ENCODE measurements at regions of chr5 and their contacts with region 1.

Region 1: DNA sequence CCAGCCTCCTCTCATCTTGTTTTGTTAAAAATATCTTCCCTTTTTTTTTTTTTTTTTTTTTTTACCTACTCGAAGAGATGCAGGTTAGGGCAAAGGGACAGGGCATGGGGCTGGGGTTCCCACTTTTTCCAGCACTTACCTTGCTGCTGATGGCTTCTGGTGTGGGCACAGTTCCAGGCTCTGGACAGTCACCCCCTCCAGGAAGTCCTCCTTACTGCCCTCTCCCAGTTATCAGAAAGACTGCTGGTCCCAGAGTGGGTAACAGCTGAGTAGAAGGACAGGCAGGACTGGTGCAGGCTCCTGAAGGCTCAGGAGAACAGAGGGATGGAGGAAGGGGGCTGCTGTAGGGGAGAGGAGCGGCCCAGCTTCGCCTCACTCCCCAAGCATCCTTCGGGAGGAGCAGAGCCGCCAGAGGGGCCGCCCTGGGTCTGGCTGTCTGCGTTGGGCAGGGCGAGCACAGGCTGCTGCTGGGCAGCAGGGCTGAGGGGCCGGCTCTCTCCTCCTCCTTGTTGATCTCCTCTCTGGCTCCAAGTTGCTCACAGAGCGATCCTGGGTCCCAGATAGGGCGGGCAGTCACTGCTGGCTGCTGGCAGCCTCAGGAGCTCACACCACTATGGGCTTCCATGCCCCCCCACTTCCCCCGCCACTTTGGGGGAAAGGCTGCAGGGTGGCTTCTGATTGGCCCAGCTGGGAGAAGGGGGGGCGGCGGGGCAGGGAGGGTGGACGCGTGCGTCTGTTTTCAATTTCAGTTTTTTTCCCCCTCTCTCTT is at the start of gene PDGFRB:
- DNase-seq: peak; percentile 88
- H3K4me3 ChIP-seq: peak within 1 kb of the TSS; percentile 67 to 96
- H3K27ac ChIP-seq: peak within 1 kb of the TSS; percentile 94 to 98
- H3K4me1 ChIP-seq: peaks cover 43 to 86% of the 10 kb centered on the region in 2 experiments
- H3K27me3 ChIP-seq: no peaks in the 10 kb centered on the region
- CTCF ChIP-seq: no peak; the same call in 1 of the 2 replicates
- EP300 ChIP-seq: peak; percentile 56 to 59; a peak in 2 of 4 replicates
- RAD21 ChIP-seq: peak; percentile 4; the same call in 1 of the 2 replicates
- polyA plus RNA-seq, gene PDGFRB: 25.9 and 32.1 TPM in 2 replicates

Region 2: DNA sequence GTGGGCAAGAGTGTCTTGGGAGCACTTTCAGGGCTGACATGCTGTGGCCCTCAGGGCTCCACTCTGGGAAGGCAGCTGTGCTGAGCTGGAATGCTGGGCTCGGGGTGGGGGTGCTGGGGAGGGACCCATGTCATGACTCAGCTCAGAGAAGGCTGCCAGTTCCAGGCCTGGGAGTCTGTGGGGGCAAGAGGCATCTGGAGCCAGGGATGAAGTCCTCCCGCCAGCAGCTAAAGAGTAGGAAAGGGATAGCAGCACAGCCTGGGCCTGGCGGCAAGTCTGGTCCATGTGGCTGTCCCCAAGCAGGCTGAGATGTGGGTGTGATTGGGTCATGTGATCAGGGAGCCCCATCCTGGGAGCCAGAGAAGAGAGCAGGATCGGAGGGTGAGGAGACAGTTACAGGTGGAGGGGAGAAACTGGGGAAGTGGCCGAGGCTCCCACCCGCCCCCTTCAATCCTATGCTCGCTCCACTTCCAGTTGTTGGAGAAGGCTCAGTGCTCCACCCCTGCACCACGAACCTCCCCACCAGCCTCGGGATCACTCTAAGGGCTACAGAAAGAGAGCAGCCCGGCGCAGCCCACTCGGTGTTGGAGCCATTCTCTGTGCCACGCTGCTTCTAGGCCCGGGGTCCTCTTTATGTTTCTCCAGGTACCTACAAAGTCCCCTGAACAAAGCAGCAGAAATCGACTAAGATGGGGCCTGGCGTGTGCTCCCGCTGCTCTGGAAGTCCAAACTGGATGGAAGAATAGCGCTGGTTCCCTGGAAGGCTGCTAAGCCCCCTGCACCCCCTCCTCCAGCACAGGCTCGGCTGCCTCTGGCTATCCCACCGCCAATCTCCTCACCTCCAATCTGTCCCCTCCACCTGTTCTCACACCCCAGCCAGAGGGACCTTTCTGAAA is 11.8 kb before region 1 on chr5:
- CTCF ChIA-PET with region 1: interaction called, 16 read pairs
- POLR2A ChIA-PET with region 1: interaction called, 10 read pairs
- DNase-seq: peak; percentile 68
- H3K4me3 ChIP-seq: peak overlapping the region in 1 of 2 experiments; percentile 30; a peak in 2 of 4 replicates
- H3K27ac ChIP-seq: peak overlapping the region; percentile 92 to 99
- H3K4me1 ChIP-seq: peaks cover 60 to 86% of the 10 kb centered on the region in 2 experiments
- H3K27me3 ChIP-seq: no peaks in the 10 kb centered on the region
- CTCF ChIP-seq: no peak
- EP300 ChIP-seq: peak in 1 of 2 experiments; percentile 21; a peak in 2 of 4 replicates
- RAD21 ChIP-seq: no peak

Region 3: GRCh38 chr5:150209020-150209635 is 53.7 kb after region 1 on chr5:
- CTCF ChIA-PET with region 1: no interaction called
- POLR2A ChIA-PET with region 1: no interaction called
- DNase-seq: no peak
- H3K4me3 ChIP-seq: no peak overlapping the region
- H3K27ac ChIP-seq: no peak overlapping the region
- H3K4me1 ChIP-seq: 0 out of 4 replicates have a peak, but pooled peaks cover 0 to 4% of the 10 kb centered on the region in 2 experiments
- H3K27me3 ChIP-seq: no peaks in the 10 kb centered on the region
- CTCF ChIP-seq: no peak
- EP300 ChIP-seq: no peak
- RAD21 ChIP-seq: no peak

Measured in SK-N-SH (cell line).